Calu3 (cell line): ENCODE measurements at regions of chr2 and their contacts with region 1.

Region 1: GRCh38 chr2:166700079-166700478 is 188.2 kb upstream of the XIRP2 start:
- DNase-seq: no peak
- H3K4me3 Mint-ChIP-seq: no peak overlapping the region
- H3K27ac Mint-ChIP-seq: no peak overlapping the region
- H3K4me1 Mint-ChIP-seq: no peaks in the 10 kb centered on the region
- H3K27me3 Mint-ChIP-seq: no peaks in the 10 kb centered on the region
- CTCF ChIP-seq: no peak

Region 2: GRCh38 chr2:166895243-166895642 is 195.2 kb after region 1 on chr2:
- CTCF ChIA-PET with region 1: no interaction called
- intact Hi-C with region 1: loop called (anchors 5 kb)
- DNase-seq: no peak
- H3K4me3 Mint-ChIP-seq: no peak overlapping the region
- H3K27ac Mint-ChIP-seq: no peak overlapping the region
- H3K4me1 Mint-ChIP-seq: no peaks in the 10 kb centered on the region
- H3K27me3 Mint-ChIP-seq: no peaks in the 10 kb centered on the region
- CTCF ChIP-seq: no peak